Right ventricle myocardium superior (tissue), 1 donor: ENCODE measurements at regions of chr20 and their contacts with region 1.

Region 1: DNA sequence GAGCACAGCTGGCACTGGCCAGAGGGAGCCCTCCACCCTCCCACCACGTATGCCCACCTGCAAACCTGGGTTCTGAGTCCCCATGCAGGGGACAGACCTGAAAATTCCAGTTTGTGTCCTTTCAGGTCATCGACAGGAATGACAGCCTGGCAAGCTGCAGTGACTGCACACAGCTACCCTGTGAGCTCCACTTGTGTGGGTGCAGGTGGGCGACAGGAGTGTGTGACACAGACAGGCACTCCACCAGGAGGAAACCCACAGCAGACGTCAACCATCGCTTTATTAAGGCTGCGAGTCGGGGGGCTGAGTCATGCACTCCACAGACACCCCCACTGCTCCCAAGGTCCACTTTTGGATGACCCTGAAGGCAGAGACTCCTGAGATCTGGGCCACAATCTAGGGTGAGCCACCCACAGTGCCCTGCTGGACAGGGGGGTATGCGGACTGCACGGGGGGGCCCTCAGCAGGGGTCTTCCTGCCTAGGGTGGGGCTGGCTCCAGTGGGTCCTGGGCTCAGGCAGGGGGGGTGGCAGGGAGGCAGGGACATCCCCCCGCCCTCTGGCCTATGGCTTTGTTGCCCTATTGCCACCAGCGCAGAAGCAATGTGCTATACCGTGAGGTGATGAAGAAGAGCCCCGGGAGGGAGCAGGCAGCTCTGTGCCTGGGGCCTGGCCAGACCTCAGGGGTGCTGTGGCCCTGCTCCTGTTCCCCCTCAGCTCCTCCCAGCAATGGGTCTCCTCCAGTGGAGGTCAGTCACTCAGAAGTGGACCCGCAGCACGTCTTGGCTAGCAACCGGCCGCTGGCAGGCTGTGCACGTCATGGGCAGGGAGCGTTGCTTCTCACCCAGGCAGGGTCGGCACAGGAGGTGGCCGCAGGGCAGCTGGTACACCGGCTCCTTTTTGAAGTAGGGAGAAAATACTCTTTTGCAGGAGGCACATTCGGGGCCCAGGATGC is 25.1 kb upstream of the AVP start:
- DNase-seq: no peak
- ATAC-seq: no peak

Region 2: DNA sequence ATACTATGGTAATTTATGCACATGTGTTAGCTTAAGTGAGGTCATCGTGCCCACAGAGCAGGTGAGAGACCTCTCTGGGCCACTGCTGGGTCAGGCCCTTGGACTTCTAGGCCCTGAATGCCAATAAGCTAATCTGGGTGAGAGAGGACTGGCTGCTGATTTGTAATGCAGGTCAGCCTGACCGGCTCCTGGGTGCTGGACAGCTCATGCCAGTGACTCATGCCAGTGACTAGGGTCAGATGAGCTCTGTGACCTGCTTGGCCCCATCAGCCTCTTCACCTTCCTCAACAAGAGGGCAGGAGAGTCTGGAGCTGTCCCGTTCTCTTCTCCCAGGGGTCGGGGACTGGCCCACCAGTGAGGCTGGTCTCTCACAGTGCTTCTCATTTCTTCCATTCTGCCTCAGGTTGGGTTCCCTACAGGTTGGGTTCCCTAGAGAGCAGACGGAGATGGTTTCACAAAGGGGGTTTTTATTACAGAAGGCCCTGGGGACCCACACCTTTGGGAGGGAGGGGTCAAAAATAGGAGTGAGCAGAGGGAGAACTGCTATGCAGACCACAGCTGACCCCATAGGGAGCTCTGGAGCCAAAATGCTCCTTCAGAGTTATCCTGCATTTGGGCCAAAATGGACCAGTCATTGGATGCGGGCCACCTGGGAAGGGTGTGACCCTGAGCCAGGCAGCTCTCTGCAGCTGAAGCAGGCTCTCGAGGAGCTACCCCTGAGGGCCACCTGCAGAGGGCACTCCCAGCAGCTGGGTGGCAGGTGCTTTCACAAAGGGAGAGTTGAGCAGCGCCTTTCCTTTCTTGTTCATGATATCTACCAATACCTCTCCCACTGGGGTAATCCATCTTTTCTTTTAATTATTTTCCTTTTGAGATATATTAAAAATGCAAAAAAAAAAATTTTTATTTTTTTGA is 40.4 kb before region 1 on chr20:
- intact Hi-C with region 1: loop called (anchors 5 kb)
- DNase-seq: no peak
- ATAC-seq: no peak